ENCODE measurements at regions of chr2 and their contacts with region 1.

Region 1: DNA sequence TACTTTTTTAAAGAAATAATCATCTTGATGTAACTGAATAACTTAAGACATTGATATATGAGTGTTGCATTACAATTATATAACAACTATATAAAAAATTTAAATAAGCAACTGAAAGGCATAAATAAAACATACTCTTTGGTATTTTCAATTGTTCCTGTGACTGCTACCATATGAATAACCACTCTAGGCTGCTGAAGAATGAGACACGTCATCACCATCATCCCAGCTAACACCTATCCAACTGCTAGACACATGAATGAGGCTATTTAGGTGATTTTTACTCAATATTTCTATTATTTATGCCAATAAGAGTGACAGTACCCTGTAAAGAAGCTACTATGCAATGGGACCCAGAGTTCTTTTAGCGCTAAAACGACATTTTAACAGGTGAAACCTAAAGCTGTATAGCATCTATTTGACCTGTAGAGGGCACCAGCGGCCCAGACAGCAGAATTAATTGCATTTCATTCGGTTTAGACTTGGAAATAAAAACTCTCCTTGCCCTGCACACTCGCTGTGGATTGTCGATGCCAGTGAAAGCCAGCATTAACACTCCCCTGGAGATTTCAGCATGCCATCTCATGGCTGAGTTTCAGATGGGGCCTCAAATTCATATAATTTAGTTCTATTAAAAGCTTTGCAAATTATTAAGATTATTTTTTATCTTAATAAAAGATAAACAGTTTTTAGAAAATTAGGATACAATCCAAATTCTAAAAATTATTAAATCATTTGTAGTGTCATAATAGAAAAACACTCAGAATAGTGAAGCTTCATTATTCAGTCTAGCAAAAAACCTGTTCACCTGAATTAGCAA is 89.4 kb upstream of the MAP2 start:
- DNase-seq: peak; percentile 39 to 61
- H3K4me3 ChIP-seq: no peak overlapping the region
- H3K4me3 Mint-ChIP-seq: no peak overlapping the region
- H3K27ac Mint-ChIP-seq: no peak overlapping the region
- H3K4me1 ChIP-seq: no peaks in the 10 kb centered on the region
- H3K4me1 Mint-ChIP-seq: no peaks in the 10 kb centered on the region
- H3K27me3 ChIP-seq: no peaks in the 10 kb centered on the region
- H3K27me3 Mint-ChIP-seq: no peaks in the 10 kb centered on the region
- CTCF ChIP-seq: peak; percentile 79 to 84

Region 2: GRCh38 chr2:208392300-208393080 is 941.9 kb before region 1 on chr2:
- CTCF ChIA-PET with region 1: interaction called, 5 read pairs
- POLR2A ChIA-PET with region 1: no interaction called
- intact Hi-C with region 1: loop called (anchors 1 kb)
- DNase-seq: no peak
- H3K4me3 ChIP-seq: no peak overlapping the region
- H3K4me3 Mint-ChIP-seq: no peak overlapping the region
- H3K27ac Mint-ChIP-seq: no peak overlapping the region
- H3K4me1 ChIP-seq: no peaks in the 10 kb centered on the region
- H3K4me1 Mint-ChIP-seq: no peaks in the 10 kb centered on the region
- H3K27me3 ChIP-seq: no peaks in the 10 kb centered on the region
- H3K27me3 Mint-ChIP-seq: peaks cover 3% of the 10 kb centered on the region
- CTCF ChIP-seq: no peak

Region 3: GRCh38 chr2:209236377-209236776 is 98.0 kb before region 1 on chr2:
- CTCF ChIA-PET with region 1: no interaction called
- POLR2A ChIA-PET with region 1: no interaction called
- intact Hi-C with region 1: no loop called
- DNase-seq: no peak
- H3K4me3 ChIP-seq: no peak overlapping the region
- H3K4me3 Mint-ChIP-seq: no peak overlapping the region
- H3K27ac Mint-ChIP-seq: no peak overlapping the region
- H3K4me1 ChIP-seq: no peaks in the 10 kb centered on the region
- H3K4me1 Mint-ChIP-seq: no peaks in the 10 kb centered on the region
- H3K27me3 ChIP-seq: no peaks in the 10 kb centered on the region
- H3K27me3 Mint-ChIP-seq: no peaks in the 10 kb centered on the region
- CTCF ChIP-seq: no peak

Region 4: DNA sequence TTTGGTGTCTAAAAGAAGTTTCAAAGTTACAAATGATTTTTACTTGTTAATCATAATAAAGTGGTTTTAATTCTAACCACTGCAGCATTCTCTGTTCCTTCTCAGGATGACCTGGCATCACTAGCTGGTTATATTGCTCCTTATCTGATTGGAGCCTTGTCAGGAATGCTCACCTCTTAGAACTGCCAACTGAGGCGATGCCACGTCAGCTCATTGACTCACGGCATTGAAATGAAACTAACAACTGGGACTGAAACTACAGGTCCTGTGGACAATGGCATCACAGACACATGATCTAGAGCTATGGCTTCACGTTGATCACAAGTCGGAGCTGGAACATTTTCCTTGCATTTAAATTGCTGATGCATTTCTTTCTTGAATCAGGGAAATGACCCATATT is 34.5 kb after region 1 on chr2:
- CTCF ChIA-PET with region 1: no interaction called
- POLR2A ChIA-PET with region 1: no interaction called
- intact Hi-C with region 1: loop called (anchors 2 kb)
- DNase-seq: peak; percentile 73 to 85
- H3K4me3 ChIP-seq: no peak overlapping the region
- H3K4me3 Mint-ChIP-seq: peak overlapping the region; percentile 55
- H3K27ac Mint-ChIP-seq: peak overlapping the region; percentile 80
- H3K4me1 ChIP-seq: peaks cover 24% of the 10 kb centered on the region
- H3K4me1 Mint-ChIP-seq: peaks cover 9% of the 10 kb centered on the region
- H3K27me3 ChIP-seq: no peaks in the 10 kb centered on the region
- H3K27me3 Mint-ChIP-seq: no peaks in the 10 kb centered on the region
- CTCF ChIP-seq: no peak

Region 5: DNA sequence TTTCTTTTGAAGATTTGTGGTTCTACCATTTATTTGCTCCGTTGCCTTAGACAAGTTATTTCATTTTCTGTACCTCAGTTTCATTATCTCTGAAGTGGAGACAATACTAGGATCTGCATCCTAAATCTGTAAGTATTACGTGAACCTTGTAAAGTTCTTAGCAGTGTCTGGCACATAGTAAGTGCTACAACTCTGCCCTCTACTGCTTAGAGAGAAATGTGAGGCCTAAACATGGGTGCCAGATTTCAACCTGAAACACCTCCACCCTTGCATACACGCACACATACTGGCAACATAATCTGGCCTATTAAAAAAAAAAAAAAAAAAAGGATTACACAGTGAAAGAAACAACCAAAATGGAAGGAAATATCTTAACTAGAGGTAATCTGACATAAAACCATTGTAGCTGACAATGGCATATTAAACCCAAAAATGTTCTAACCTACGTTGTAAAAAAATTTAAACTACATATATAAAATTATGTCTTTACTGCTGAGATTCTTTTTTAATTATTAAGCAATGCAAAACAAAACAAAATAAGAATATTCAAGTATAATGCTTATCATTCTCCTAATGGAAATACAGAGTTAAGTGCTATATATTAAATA is 222.1 kb after region 1 on chr2:
- CTCF ChIA-PET with region 1: interaction called, 4 read pairs
- POLR2A ChIA-PET with region 1: no interaction called
- intact Hi-C with region 1: loop called (anchors 1 kb)
- DNase-seq: peak in 1 of 2 experiments; percentile 12
- H3K4me3 ChIP-seq: no peak overlapping the region
- H3K4me3 Mint-ChIP-seq: no peak overlapping the region
- H3K27ac Mint-ChIP-seq: no peak overlapping the region
- H3K4me1 ChIP-seq: no peaks in the 10 kb centered on the region
- H3K4me1 Mint-ChIP-seq: no peaks in the 10 kb centered on the region
- H3K27me3 ChIP-seq: no peaks in the 10 kb centered on the region
- H3K27me3 Mint-ChIP-seq: no peaks in the 10 kb centered on the region
- CTCF ChIP-seq: peak in 1 of 2 experiments; percentile 58

Region 6: DNA sequence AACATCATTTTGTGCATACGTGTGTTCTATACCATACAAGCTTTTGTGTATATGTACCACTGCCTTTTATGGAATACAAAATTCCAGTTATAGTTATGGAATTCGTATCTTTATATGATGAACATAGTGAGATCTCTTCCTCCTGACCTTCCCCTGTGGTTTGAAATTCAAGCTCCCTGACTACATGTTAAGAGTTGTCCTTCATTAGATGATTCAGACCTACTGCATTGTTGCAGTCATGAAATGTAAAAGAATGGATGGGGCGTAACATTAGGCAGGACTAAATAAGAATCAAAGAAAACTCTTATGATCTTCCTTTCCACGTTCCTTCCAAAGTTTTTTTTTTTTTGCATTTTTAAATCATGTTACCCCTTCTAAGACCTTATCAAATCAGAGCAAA is 544.3 kb after region 1 on chr2:
- CTCF ChIA-PET with region 1: no interaction called
- POLR2A ChIA-PET with region 1: no interaction called
- intact Hi-C with region 1: no loop called
- DNase-seq: no peak
- H3K4me3 ChIP-seq: no peak overlapping the region
- H3K4me3 Mint-ChIP-seq: no peak overlapping the region
- H3K27ac Mint-ChIP-seq: no peak overlapping the region
- H3K4me1 ChIP-seq: no peaks in the 10 kb centered on the region
- H3K4me1 Mint-ChIP-seq: no peaks in the 10 kb centered on the region
- H3K27me3 ChIP-seq: no peaks in the 10 kb centered on the region
- H3K27me3 Mint-ChIP-seq: peaks cover 4% of the 10 kb centered on the region
- CTCF ChIP-seq: no peak

Region 7: DNA sequence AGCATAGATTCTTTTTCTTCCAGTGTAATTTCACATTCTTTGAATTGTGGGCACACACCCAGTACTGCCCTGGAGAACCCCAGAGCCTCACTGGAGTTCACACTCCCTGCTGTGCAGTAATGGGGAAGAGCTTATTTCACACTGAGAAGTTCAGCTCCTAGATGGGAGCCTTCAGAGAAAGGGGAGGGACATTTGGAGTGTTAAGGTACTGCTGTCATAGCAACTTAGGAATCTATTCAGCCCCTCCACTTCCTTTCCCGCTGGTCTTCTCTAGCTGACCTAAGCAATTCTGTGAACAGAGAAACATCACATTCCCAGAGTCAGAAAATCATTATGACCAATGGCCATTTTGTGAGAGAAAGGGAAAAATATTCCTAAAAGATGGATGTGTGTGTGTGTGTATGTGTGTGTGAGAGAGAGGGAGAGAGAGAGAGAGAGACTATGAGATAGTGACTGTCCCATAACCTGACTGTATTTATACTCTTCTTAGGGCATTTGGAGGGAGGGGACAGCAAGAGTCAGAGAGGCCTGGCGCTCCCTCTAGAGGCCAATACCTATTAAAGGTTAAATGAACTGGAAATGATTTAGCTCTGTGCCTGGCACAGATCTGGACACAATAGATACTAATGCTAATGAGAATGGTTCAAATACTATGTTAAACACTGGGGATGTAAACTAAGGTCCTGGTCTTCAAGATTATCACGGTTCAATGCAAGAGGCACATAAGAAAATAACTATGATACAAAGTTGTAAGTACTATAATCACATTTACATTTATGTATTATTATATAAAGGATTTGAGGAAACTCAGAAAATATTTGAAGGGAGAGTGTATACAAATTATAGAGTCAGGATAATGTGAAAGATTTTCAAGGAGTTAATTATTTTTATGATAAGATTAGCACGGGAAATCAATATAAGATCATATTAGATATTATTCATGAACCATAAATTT is 626.5 kb after region 1 on chr2:
- CTCF ChIA-PET with region 1: no interaction called
- POLR2A ChIA-PET with region 1: no interaction called
- intact Hi-C with region 1: loop called (anchors 5 kb)
- DNase-seq: peak; percentile 52 to 55
- H3K4me3 ChIP-seq: no peak overlapping the region
- H3K4me3 Mint-ChIP-seq: no peak overlapping the region
- H3K27ac Mint-ChIP-seq: no peak overlapping the region
- H3K4me1 ChIP-seq: no peaks in the 10 kb centered on the region
- H3K4me1 Mint-ChIP-seq: no peaks in the 10 kb centered on the region
- H3K27me3 ChIP-seq: no peaks in the 10 kb centered on the region
- H3K27me3 Mint-ChIP-seq: no peaks in the 10 kb centered on the region
- CTCF ChIP-seq: peak; percentile 64 to 76

Measured in Caco-2 (cell line).